ENCODE measurements at regions of chr19 and their contacts with region 1.

Region 1: GRCh38 chr19:13053761-13054625 is 48.7 kb downstream of the LYL1 start:
- DNase-seq: no peak

Region 2: GRCh38 chr19:12867120-12868099 is 186.6 kb before region 1 on chr19:
- CTCF ChIA-PET with region 1: no interaction called
- POLR2A ChIA-PET with region 1: no interaction called
- DNase-seq: peak; percentile 94

Region 3: GRCh38 chr19:12913851-12914690 is 139.9 kb before region 1 on chr19:
- CTCF ChIA-PET with region 1: no interaction called
- POLR2A ChIA-PET with region 1: no interaction called
- DNase-seq: no peak

Region 4: DNA sequence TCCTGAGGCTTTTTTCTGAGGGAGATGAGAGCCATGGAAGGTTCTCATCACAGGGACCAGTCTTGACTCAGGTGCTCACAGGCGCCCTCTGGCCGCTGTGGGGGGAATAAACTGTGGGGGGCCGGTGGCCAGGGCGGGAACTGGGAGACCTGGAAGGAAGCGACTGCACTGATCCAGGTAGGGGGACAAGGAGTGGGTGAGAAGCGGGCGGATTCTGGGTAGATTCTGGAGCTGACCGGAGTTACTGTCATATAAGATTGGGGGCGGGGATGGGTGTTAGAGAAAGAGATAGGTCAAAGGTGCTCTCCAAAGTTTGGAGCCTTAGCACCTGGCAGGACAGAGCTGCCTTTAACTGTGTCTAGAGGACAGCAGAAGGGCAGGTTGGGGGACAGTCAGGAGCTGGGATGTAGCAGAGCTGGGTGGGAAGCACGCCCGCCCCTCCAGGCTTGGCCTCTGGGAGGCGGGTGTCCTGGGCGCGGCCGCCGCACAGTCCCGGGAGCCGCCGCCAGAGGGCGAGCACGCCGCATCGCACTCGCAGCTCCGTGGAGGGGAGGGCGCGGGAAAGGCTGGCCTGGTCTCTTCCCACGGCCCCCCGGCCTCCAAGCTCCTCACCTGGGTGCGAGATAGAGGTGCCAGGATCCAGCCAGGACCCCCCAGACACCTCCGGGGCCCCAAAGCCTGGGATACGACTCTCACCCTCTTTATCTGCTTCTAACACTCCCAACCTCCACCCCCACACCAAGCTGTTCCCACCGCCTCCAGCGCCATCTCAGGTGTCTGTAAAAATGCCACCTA is 88.8 kb before region 1 on chr19:
- CTCF ChIA-PET with region 1: interaction called, 11 read pairs
- POLR2A ChIA-PET with region 1: no interaction called
- DNase-seq: peak; percentile 87

Region 5: DNA sequence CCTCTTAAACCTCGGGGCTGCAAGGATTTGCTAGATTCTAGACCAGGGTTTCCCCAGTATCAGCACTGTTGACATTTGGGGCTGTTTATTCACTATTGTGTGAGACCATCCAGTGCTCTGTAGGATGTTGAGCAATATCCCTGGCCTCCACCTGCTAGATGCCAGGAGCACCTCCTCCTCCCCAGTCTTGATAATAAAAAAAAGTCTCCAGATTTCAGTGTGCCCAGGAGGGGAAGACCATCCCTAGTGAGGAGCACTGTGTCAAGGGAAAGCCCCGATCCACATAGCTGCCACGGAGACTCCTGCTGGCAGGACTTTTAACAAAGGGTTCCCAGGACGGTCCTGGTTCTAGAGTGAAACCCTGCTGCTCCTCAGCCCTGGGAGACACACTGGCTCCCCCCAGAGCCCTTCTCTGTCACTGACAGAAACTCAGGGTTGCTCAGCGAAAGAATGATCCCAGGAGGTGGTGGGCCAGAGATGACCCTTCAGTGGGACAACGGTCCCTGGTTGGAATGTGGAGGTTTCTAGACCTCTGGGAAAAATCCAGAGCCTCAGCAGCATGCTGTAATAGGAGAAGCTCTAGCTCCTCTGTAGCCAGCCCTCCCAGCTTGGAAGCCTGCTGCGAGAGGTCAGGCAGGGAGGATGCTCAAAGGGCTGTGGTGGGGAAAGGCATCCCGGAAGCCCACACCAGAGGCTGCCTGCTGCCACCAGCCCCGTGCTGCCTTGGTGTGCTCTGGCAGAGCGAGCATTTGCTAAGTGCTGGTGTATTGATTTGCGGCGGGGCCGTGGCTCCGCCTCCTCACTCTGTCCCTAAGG is 28.4 kb after region 1 on chr19:
- CTCF ChIA-PET with region 1: no interaction called
- POLR2A ChIA-PET with region 1: no interaction called
- DNase-seq: peak; percentile 52

Region 6: DNA sequence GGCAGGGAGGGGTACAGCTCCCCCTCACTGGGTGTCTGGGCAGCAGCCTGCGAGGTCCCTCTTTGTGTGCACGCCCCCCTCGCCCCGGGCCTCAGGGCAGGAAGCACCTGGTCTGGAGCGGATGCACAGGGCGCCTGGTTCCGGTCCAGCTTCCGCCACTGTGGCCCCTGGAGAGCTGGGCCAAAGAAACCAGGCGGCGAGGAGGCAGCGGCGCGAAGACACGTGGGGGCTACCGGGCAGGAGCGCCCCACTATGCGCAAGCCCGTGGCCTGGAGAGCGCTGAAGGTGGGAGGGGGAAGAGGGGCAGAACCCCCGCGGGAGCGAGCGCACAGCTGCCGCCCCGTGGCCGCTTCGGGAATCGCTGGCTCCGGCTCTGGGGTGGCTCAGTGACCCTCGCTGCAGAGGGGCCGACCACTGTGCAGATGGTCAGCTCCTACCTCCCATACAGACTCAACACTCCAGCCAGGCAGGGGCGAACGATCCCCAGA is 50.4 kb after region 1 on chr19:
- CTCF ChIA-PET with region 1: no interaction called
- POLR2A ChIA-PET with region 1: no interaction called
- DNase-seq: peak; percentile 72